HCT116 (cell line): ENCODE measurements at regions of chr2 and their contacts with region 1.

Region 1: DNA sequence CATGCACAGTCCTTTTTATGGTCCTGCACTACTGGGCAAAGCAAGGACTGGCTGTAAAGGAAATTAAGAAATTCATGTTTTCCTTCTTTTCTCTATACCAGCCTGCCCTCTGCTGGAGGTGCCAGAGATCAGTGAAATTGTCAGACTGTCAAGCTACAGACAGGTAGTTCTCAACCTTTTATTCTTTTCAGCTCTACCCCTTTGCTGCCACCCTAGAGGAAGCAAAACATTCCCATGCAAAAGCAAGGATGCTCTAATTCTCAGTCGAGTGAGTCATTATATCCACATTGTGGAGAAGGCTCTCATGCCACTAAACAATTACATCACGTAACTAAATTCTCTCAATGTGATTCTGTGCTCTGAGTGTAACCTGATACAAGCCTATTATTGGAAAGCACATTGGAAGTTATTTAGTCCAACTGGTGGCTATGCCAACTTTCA is 25.0 kb upstream of the RAPGEF4 start:
- DNase-seq: no peak
- ATAC-seq: peak; percentile 92
- H3K4me3 ChIP-seq: no peak overlapping the region
- H3K27ac ChIP-seq: no peak overlapping the region
- H3K4me1 ChIP-seq: no peaks in the 10 kb centered on the region
- H3K27me3 ChIP-seq: 0 out of 2 replicates have a peak, but pooled peaks cover 3% of the 10 kb centered on the region
- CTCF ChIP-seq: peak; percentile 74 to 89 (median 75)
- POLR2A ChIP-seq: no peak
- RAD21 ChIP-seq: peak; percentile 91

Region 2: GRCh38 chr2:172172513-172173173 is 538.0 kb before region 1 on chr2:
- CTCF ChIA-PET with region 1: interaction called, 5 read pairs
- POLR2A ChIA-PET with region 1: no interaction called
- RAD21 ChIA-PET with region 1: no interaction called
- intact Hi-C with region 1: loop called (anchors 2 kb)
- DNase-seq: peak; percentile 33
- ATAC-seq: peak; percentile 100
- H3K4me3 ChIP-seq: peak overlapping the region; percentile 47 to 63
- H3K27ac ChIP-seq: no peak overlapping the region; the same call in 1 of the 2 replicates
- H3K4me1 ChIP-seq: peaks cover 5 to 13% of the 10 kb centered on the region in 2 experiments
- H3K27me3 ChIP-seq: no peaks in the 10 kb centered on the region
- CTCF ChIP-seq: peak; percentile 73 to 86 (median 79)
- POLR2A ChIP-seq: no peak
- RAD21 ChIP-seq: peak; percentile 97

Region 3: GRCh38 chr2:172234716-172235691 is 475.6 kb before region 1 on chr2:
- CTCF ChIA-PET with region 1: no interaction called
- POLR2A ChIA-PET with region 1: no interaction called
- RAD21 ChIA-PET with region 1: no interaction called
- intact Hi-C with region 1: no loop called
- DNase-seq: no peak
- ATAC-seq: no peak
- H3K4me3 ChIP-seq: no peak overlapping the region
- H3K27ac ChIP-seq: no peak overlapping the region
- H3K4me1 ChIP-seq: peaks cover 8 to 26% of the 10 kb centered on the region in 2 experiments
- H3K27me3 ChIP-seq: no peaks in the 10 kb centered on the region
- CTCF ChIP-seq: no peak
- POLR2A ChIP-seq: no peak
- RAD21 ChIP-seq: no peak

Region 4: GRCh38 chr2:172484253-172484652 is 226.4 kb before region 1 on chr2:
- CTCF ChIA-PET with region 1: interaction called, 6 read pairs
- POLR2A ChIA-PET with region 1: no interaction called
- RAD21 ChIA-PET with region 1: no interaction called
- intact Hi-C with region 1: loop called (anchors 5 kb)
- DNase-seq: no peak
- ATAC-seq: no peak
- H3K4me3 ChIP-seq: no peak overlapping the region
- H3K27ac ChIP-seq: no peak overlapping the region
- H3K4me1 ChIP-seq: no peaks in the 10 kb centered on the region
- H3K27me3 ChIP-seq: no peaks in the 10 kb centered on the region
- CTCF ChIP-seq: peak in 2 of 3 experiments; percentile 20 to 41; a peak in 2 of 6 replicates
- POLR2A ChIP-seq: no peak
- RAD21 ChIP-seq: peak; percentile 59

Region 5: DNA sequence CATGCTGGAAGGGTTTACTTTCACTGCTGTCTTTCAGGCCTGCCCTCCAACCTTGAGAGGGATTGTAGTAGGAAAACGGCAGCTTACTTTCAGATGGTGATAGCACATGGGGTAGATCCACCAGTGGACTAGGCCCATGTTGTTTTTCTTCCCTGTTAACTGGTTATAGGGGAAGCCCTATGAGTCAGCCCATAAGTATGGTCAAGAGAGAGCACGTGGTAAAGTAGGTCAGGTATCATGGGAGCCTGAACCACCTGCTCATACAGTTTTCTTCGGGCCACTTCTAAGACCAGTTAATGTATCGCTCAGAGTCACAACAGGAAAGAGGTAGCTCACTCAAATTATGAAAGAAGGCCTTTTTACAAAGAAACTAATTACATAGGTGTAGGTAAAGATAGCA is 121.7 kb before region 1 on chr2:
- CTCF ChIA-PET with region 1: interaction called, 28 read pairs
- POLR2A ChIA-PET with region 1: no interaction called
- RAD21 ChIA-PET with region 1: no interaction called
- intact Hi-C with region 1: loop called (anchors 1 kb)
- DNase-seq: no peak
- ATAC-seq: no peak
- H3K4me3 ChIP-seq: no peak overlapping the region
- H3K27ac ChIP-seq: no peak overlapping the region
- H3K4me1 ChIP-seq: no peaks in the 10 kb centered on the region; a peak in 1 of 4 replicates
- H3K27me3 ChIP-seq: no peaks in the 10 kb centered on the region
- CTCF ChIP-seq: no peak
- POLR2A ChIP-seq: no peak
- RAD21 ChIP-seq: no peak

Region 6: GRCh38 chr2:172772633-172773032 is 62.0 kb after region 1 on chr2:
- CTCF ChIA-PET with region 1: no interaction called
- POLR2A ChIA-PET with region 1: no interaction called
- RAD21 ChIA-PET with region 1: no interaction called
- intact Hi-C with region 1: no loop called
- DNase-seq: no peak
- ATAC-seq: no peak
- H3K4me3 ChIP-seq: no peak overlapping the region
- H3K27ac ChIP-seq: no peak overlapping the region
- H3K4me1 ChIP-seq: no peaks in the 10 kb centered on the region
- H3K27me3 ChIP-seq: peaks cover 31% of the 10 kb centered on the region
- CTCF ChIP-seq: no peak
- POLR2A ChIP-seq: no peak
- RAD21 ChIP-seq: no peak